ENCODE measurements at regions of chr21 and their contacts with region 1.

Region 1: DNA sequence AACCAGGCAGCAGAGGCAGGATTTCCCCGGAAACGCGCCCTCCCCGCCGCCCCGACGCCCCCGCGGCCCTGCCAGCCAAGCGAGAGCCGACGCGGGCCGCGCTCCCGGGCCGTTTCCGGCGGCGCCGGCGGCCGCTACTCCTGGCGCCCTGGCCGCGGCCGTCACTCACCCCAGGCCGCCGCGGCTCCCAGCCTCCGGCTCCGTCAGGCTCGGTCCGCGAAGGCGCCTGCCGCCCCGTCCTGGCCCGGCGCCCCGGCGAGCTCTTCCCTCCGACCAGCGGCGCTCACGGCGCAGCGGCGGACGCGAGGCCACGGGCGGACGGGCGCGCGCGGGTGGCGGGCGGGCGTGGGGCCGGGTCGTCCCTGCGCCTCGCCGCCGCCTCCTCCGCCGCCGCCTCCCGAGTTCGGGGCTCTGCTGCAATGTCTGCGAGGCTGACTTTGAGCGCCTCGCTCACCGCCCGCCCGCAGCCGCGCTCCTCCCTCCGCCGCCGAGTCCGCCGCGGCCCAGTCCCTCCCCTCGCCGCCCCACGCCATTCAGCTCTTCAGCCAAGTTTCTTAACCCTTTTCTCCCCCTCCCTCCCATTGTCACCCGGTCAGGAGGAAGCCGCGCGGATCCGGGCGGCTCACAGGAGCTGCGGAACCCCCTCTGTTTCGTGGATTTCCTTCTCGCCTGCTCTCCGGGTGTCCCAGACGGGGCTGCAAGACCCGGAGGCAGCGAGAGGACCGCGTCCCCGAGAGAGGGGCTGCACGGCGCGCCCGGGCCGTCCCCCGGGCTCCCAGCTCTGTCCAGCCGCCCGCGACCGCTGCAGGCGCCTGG is at the start of gene NRIP1:
- DNase-seq: peak; percentile 73
- H3K4me3 Mint-ChIP-seq: peak within 1 kb of the TSS; percentile 93
- H3K27ac Mint-ChIP-seq: peak within 1 kb of the TSS; percentile 87
- H3K4me1 Mint-ChIP-seq: peaks cover 40% of the 10 kb centered on the region
- H3K27me3 Mint-ChIP-seq: peaks cover 53% of the 10 kb centered on the region
- total RNA-seq, gene NRIP1: 7.9 and 8.3 TPM in 2 replicates

Region 2: DNA sequence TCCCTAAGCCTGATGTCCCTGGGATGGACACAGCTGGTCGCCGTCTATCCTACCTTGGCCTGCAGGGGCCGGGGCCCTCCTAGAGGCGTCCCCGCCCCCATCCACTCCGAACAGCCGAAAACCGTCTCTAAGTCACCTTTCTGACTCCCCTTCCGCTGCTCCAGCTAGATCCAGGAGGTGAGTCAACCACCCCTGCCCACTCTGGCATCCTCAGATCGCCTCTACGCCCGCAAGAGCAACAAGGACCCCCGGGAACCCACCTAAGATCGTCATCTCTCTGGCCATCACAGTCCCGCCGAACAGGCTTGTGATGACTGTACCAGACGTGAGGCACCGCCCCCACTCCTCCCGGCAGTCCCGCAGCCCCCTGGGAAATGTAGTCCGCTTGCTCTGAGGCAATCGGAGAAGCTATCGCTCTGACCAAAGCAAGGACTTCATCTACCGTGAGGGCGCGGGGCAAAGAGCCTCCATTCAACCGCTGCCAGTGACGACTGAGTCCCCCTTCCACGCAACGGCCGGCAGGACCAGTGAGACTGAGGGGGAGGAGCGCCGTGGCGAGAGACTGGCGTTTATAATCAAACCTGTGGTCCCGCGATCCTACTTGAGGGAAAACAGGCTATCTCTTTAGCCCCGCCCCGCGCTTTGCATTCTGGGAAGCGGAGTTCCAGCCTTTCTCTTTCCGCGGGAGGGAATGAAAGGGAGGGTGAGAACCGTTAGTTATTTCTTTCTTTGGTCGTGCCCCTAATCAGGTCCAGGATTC is 681.8 kb before region 1 on chr21 and contains the start of gene HSPA13:
- intact Hi-C with region 1: loop called (anchors 1 kb)
- DNase-seq: peak; percentile 99
- H3K4me3 Mint-ChIP-seq: peak within 1 kb of the TSS; percentile 98
- H3K27ac Mint-ChIP-seq: peak within 1 kb of the TSS; percentile 98
- H3K4me1 Mint-ChIP-seq: peaks cover 34% of the 10 kb centered on the region
- H3K27me3 Mint-ChIP-seq: peaks cover 3% of the 10 kb centered on the region
- total RNA-seq, gene HSPA13: 40.6 and 47.6 TPM in 2 replicates

Region 3: GRCh38 chr21:14864211-14865021 is 200.4 kb before region 1 on chr21:
- intact Hi-C with region 1: loop called (anchors 10 kb)
- DNase-seq: peak; percentile 19
- H3K4me3 Mint-ChIP-seq: no peak overlapping the region
- H3K27ac Mint-ChIP-seq: no peak overlapping the region
- H3K4me1 Mint-ChIP-seq: peaks cover 6% of the 10 kb centered on the region
- H3K27me3 Mint-ChIP-seq: peaks cover 10% of the 10 kb centered on the region

Region 4: DNA sequence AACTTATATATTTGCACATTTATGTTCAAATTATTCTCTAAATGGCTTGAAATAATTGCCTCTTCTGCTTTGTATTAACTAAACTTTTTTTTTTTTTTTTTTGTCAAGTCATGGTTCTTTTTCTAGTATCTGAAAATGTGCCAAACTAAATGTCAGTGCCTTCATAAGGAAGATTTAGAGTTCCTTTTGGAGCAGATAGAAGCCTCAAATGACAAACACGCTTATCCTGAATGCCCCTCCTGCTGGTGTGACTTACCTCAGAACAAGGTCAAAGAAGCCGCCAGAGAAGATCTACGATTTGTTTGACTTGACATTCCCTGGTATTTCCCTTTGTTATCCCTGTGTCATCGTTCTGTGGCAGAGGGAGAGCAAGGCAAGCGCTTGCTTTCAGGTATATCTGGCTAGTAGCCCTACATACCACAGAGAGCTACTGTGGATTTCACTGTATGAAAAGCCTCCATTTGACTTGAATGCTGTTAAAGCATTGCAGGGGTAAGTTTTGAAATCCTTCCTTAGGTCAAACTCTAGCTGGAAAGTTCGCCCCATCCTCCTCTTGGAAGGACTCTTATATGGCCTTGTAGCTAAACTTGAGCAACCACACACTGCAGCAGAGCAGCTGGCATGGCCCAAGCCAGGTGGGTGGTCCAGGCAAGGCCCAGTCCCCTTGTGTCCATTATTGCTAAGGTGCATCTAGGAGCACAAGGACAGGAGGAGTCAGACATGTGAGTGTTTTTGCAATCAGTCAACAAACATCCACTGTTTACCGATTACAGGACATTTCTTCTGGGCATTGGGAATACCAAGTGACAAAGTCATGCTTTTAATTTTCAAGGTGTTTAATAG is 379.6 kb after region 1 on chr21:
- intact Hi-C with region 1: loop called (anchors 5 kb)
- DNase-seq: no peak
- H3K4me3 Mint-ChIP-seq: no peak overlapping the region
- H3K27ac Mint-ChIP-seq: no peak overlapping the region
- H3K4me1 Mint-ChIP-seq: peaks cover 10% of the 10 kb centered on the region
- H3K27me3 Mint-ChIP-seq: no peaks in the 10 kb centered on the region

Region 5: GRCh38 chr21:15514073-15514946 is 449.5 kb after region 1 on chr21:
- intact Hi-C with region 1: loop called (anchors 5 kb)
- DNase-seq: peak; percentile 62
- H3K4me3 Mint-ChIP-seq: peak overlapping the region; percentile 15
- H3K27ac Mint-ChIP-seq: peak overlapping the region; percentile 46
- H3K4me1 Mint-ChIP-seq: peaks cover 17% of the 10 kb centered on the region
- H3K27me3 Mint-ChIP-seq: no peaks in the 10 kb centered on the region

Region 6: DNA sequence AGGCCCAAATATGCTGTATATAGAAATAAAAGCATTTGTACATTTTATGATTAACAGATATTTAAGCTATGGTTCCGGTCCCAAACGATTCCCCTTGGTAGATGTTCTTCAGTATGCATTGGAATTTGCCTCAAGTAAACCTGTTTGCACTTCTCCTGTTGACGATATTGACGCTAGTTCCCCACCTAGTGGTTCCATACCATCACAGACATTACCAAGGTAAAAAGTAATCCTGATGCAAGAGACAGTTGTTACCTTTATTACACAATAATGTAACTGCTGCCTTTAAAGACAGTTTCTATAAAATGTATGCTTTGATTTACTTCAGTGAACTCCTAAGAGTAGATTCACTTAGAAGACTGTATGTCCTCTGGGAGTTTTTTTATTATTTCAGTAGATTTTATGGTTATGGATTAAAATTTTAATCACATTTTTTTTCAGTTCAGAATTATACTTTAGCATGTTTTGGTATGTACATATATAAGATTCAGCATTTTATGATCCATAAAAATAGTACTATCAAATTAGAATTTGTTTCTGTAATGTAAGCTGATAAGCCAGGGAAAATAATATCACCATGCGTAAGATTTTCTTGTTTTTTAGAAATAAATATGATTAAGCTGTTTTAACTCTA is 761.5 kb after region 1 on chr21:
- intact Hi-C with region 1: loop called (anchors 10 kb)
- DNase-seq: peak; percentile 10
- H3K4me3 Mint-ChIP-seq: no peak overlapping the region
- H3K27ac Mint-ChIP-seq: no peak overlapping the region
- H3K4me1 Mint-ChIP-seq: peaks cover 24% of the 10 kb centered on the region
- H3K27me3 Mint-ChIP-seq: no peaks in the 10 kb centered on the region